PC-3 (cell line): ENCODE measurements at regions of chr7 and their contacts with region 1.

Region 1: GRCh38 chr7:129218514-129219062 is 6.2 kb upstream of the AHCYL2 start:
- DNase-seq: peak; percentile 86
- ATAC-seq: peak; percentile 95
- H3K4me3 ChIP-seq: peak overlapping the region; percentile 34; the same call in 1 of the 2 replicates
- H3K27ac ChIP-seq: no peak overlapping the region
- H3K4me1 ChIP-seq: peaks cover 5% of the 10 kb centered on the region; the same call in 1 of the 2 replicates
- H3K27me3 ChIP-seq: no peaks in the 10 kb centered on the region
- CTCF ChIP-seq: peak; percentile 89

Region 2: GRCh38 chr7:128954830-128955802 is 263.5 kb before region 1 on chr7:
- CTCF ChIA-PET with region 1: no interaction called
- POLR2A ChIA-PET with region 1: no interaction called
- intact Hi-C with region 1: no loop called
- DNase-seq: peak; percentile 15
- ATAC-seq: no peak
- H3K4me3 ChIP-seq: no peak overlapping the region
- H3K27ac ChIP-seq: no peak overlapping the region
- H3K4me1 ChIP-seq: no peaks in the 10 kb centered on the region
- H3K27me3 ChIP-seq: no peaks in the 10 kb centered on the region
- CTCF ChIP-seq: no peak

Region 3: DNA sequence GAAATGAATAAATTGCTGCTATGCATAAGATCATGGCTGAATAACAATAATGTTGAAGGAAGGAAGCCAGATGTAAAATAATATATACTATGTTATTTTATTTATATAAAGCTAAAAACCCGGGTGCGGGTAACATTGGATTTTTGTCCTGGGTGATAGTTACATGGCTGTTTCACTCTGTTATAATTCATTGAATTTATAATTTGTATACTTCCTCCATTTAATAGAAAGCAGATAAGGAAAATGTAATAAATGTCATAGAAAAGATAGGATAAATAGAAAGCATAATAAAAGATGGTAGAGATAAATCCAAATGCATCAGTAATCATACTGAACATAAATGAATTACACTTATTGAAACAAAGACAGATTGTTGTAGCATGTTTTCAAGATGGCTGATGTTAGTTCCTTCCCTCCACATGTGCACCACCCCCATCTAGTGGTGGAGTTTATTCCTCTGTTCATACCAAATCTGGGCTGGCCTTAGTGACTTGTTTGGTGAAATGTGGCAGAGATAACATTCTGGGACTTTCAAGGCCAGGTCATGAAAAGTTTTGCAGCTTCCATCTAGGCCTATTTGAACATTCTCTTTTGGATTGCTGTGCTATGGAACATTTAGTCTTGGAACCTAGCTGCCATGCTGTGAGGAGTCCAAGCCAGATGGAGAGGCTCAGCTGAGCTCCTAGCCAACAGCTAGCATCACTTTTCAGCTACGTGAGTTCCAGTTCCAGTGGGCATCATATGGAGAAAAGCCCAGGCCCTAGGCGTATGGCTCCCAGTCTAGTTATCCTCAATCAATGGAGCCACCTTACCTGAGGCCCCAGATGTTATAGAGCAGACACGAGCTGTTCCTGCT is 53.1 kb after region 1 on chr7:
- CTCF ChIA-PET with region 1: interaction called, 5 read pairs
- POLR2A ChIA-PET with region 1: no interaction called
- intact Hi-C with region 1: loop called (anchors 1 kb)
- DNase-seq: peak; percentile 76
- ATAC-seq: peak; percentile 82
- H3K4me3 ChIP-seq: no peak overlapping the region
- H3K27ac ChIP-seq: no peak overlapping the region
- H3K4me1 ChIP-seq: no peaks in the 10 kb centered on the region
- H3K27me3 ChIP-seq: no peaks in the 10 kb centered on the region
- CTCF ChIP-seq: peak; percentile 80

Region 4: GRCh38 chr7:129298268-129298893 is 79.8 kb after region 1 on chr7:
- CTCF ChIA-PET with region 1: interaction called, 16 read pairs
- POLR2A ChIA-PET with region 1: no interaction called
- intact Hi-C with region 1: loop called (anchors 1 kb)
- DNase-seq: peak; percentile 64
- ATAC-seq: 0 out of 2 replicates have a peak, but pooled peaks have one; percentile 40
- H3K4me3 ChIP-seq: no peak overlapping the region
- H3K27ac ChIP-seq: no peak overlapping the region
- H3K4me1 ChIP-seq: peaks cover 7% of the 10 kb centered on the region
- H3K27me3 ChIP-seq: no peaks in the 10 kb centered on the region
- CTCF ChIP-seq: peak; percentile 88

Region 5: DNA sequence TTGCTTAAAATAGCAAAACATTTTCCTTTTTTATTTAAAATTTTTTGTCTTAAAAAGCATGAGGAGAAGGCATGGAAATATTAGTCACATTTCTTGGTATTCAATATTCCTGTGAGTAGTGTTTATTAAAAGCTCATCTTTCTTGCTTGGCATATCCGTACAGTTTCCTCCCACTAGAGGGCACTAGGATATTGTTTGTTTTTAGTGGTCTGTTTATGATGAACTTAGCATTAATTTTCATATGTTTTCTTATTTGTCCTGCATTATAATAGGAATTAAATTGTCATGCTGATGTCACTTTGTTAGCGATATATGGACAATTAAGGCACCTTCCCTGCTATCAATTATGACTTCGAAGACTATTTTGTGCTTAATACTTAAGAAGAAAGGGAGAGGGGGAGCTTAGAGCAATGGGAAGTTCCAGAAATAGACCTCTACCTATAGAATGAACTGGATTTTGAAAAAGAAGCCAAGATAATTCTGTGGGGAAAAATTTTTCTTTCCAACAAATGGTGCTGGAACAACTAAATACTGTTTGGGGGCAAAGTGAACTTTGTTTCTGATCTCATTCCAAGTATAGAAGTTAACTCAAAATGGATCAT is 124.6 kb after region 1 on chr7:
- CTCF ChIA-PET with region 1: interaction called, 4 read pairs
- POLR2A ChIA-PET with region 1: no interaction called
- intact Hi-C with region 1: loop called (anchors 2 kb)
- DNase-seq: peak; percentile 68
- ATAC-seq: peak; percentile 85
- H3K4me3 ChIP-seq: no peak overlapping the region
- H3K27ac ChIP-seq: no peak overlapping the region
- H3K4me1 ChIP-seq: no peaks in the 10 kb centered on the region; the same call in none of the 2 replicates
- H3K27me3 ChIP-seq: no peaks in the 10 kb centered on the region
- CTCF ChIP-seq: peak; percentile 86

Region 6: GRCh38 chr7:129468087-129468486 is 249.5 kb after region 1 on chr7:
- CTCF ChIA-PET with region 1: interaction called, 9 read pairs
- POLR2A ChIA-PET with region 1: no interaction called
- intact Hi-C with region 1: loop called (anchors 1 kb)
- DNase-seq: no peak
- ATAC-seq: no peak
- H3K4me3 ChIP-seq: no peak overlapping the region
- H3K27ac ChIP-seq: no peak overlapping the region
- H3K4me1 ChIP-seq: peaks cover 23% of the 10 kb centered on the region
- H3K27me3 ChIP-seq: no peaks in the 10 kb centered on the region
- CTCF ChIP-seq: no peak

Region 7: GRCh38 chr7:129611246-129612111 is 392.9 kb after region 1 on chr7 and contains the start of gene NRF1:
- CTCF ChIA-PET with region 1: interaction called, 10 read pairs
- POLR2A ChIA-PET with region 1: no interaction called
- intact Hi-C with region 1: no loop called
- DNase-seq: peak; percentile 84
- ATAC-seq: peak; percentile 95
- H3K4me3 ChIP-seq: peak within 1 kb of the TSS; percentile 77
- H3K27ac ChIP-seq: peak within 1 kb of the TSS; percentile 71
- H3K4me1 ChIP-seq: peaks cover 24% of the 10 kb centered on the region
- H3K27me3 ChIP-seq: no peaks in the 10 kb centered on the region
- CTCF ChIP-seq: no peak
- total RNA-seq, gene NRF1: 13.6 and 21.1 TPM in 2 replicates

Region 8: GRCh38 chr7:129635300-129636029 is 416.9 kb after region 1 on chr7:
- CTCF ChIA-PET with region 1: no interaction called
- POLR2A ChIA-PET with region 1: no interaction called
- intact Hi-C with region 1: loop called (anchors 5 kb)
- DNase-seq: peak; percentile 76
- ATAC-seq: peak; percentile 100
- H3K4me3 ChIP-seq: no peak overlapping the region
- H3K27ac ChIP-seq: no peak overlapping the region
- H3K4me1 ChIP-seq: peaks cover 5% of the 10 kb centered on the region; the same call in 1 of the 2 replicates
- H3K27me3 ChIP-seq: no peaks in the 10 kb centered on the region
- CTCF ChIP-seq: peak; percentile 88